Left cardiac atrium (tissue), 4 donors: ENCODE measurements at regions of chr10 and their contacts with region 1.

Region 1: DNA sequence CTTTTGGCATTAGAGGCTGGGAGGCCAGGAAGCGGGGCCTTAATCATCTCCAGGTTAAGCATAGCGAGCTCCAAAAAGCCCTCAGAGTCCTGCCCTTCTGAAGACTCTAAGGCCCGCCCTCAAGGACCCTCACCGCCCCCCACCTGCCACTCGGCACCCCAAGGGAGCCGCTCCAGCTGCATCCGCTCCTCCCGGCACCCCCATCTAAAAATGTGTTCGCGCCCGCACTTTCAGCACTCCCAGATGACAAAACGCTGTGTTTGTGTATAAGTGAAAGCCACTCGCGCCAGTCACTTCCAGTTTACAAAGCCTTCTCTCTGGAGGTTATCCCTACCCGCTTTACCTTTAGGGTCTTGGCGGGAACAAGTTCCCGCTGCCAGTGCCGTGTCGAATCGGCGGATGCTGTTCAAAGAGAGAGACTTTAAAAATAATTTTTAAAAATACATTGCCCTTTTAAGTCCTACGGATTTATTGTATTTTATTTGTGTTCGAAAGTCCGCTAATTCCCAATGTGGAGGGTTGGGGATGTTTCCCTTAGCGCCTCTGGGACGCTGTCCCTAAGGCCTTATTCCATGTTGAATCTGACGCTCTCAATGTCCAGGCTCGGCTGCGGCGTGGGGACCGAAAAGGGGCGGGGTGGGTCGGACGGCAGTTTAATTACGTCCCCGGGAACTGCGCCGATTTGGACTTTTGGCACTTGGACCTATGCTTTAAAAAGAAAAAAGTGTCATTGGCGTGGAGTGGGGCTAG is at the starts of genes DCLRE1A and NHLRC2:
- DNase-seq: peak; percentile 86
- ATAC-seq: peak; percentile 90 to 92
- total RNA-seq, gene DCLRE1A: 4.8 to 5.3 TPM
- total RNA-seq, gene NHLRC2: 55.5 to 67.5 TPM

Region 2: DNA sequence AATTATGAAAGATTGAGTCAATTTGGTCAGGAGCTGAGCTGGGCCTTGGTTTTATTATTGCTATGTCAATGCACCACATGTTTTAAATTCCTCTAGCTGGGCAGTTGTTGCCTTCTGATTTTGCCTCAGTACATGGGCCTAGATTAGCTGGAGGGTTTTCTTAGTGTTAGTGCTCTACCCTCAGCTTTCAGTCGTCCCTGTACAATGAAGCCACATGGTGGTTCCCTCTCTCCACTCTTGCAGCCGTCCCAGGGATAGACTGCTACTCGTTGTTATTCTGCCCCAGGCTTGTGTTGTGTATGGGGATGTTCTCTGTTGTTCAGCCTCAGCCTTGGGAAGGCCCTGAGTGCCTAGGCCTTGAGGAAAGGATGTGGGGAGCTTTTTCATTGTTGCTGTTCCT is 37.3 kb after region 1 on chr10:
- intact Hi-C with region 1: loop called in 1 of 2 experiments (anchors 5 kb)
- DNase-seq: no peak
- ATAC-seq: peak; percentile 52 to 80

Region 3: GRCh38 chr10:113993489-113993991 is 139.4 kb after region 1 on chr10:
- intact Hi-C with region 1: no loop called
- DNase-seq: peak; percentile 42
- ATAC-seq: peak; percentile 85 to 86

Region 4: GRCh38 chr10:114043532-114044246 is 189.5 kb after region 1 on chr10 and contains the start of gene ADRB1:
- intact Hi-C with region 1: loop called (anchors 5 to 10 kb)
- DNase-seq: peak; percentile 92
- ATAC-seq: peak; percentile 90 to 91
- total RNA-seq, gene ADRB1: 53.0 to 60.9 TPM